RWPE1 (cell line): ENCODE measurements at regions of chr6 and their contacts with region 1.

Region 1: GRCh38 chr6:150813319-150813992 is 52.0 kb upstream of the MTHFD1L start:
- DNase-seq: peak; percentile 62
- H3K27ac ChIP-seq: peak overlapping the region; percentile 31
- CTCF ChIP-seq: no peak

Region 2: DNA sequence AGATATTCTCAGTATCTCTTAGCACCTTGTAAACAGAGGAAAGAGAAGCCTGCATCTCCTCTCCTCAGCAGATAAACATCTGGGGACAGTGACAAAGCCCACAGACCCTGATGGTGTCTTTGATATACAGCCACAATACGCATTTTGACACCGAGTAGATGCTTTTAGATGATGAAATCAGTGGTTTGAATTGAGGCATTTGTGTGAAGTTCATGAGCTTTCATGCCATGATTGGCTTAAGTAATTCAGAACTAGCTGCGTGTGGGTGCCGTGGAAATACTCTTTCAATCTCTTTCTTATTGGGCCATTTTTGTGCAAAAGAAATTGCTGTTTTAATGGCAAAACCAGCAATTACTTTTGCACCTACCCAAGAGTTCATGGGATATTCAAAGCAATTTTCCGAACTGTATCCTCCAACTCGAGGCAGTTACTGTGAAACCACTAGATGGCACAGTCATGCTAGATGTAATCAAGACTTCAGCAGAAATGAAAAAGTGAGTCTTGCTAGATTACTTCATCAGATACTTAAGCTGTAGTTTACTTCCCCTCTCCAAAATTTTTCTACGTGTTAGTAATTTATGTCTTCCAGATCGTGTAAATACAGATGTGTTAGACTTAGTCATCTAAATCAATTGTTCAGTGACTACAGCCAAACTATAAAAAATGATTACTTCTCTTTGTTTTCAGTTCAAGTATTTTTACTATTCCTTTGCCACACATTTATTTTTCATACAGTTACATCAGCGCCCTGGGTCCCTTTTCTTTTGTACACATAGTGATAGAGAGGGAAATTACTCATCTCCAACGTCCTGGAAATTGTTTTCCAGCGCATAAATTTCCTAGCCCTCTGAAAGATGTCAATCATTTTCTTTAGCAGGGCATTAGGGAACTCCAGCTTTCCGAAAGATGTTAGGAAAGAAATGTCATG is 395.3 kb before region 1 on chr6:
- CTCF ChIA-PET with region 1: interaction called, 33 read pairs
- POLR2A ChIA-PET with region 1: no interaction called
- DNase-seq: peak; percentile 83
- H3K27ac ChIP-seq: peak overlapping the region; percentile 72
- CTCF ChIP-seq: peak; percentile 86

Region 3: DNA sequence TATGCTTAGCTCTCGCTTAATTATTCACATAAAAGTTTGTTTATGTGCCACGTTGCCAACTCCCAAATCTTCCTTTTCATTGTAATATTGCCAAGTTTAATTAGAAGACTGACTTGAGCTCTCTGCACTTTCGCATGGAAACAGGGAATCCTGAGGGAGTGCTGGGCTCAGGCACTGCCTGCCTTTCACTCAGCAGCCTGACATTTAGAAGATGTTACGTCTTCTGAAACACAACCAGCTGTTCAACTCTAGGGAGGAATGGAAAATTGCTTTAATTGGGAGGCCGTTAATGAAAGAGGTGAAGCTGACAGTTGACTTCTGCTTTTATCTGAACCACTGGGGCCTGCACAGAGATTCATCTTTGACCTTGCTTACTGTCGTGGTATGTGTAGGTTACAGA is 25.4 kb before region 1 on chr6:
- CTCF ChIA-PET with region 1: no interaction called
- POLR2A ChIA-PET with region 1: no interaction called
- DNase-seq: no peak
- H3K27ac ChIP-seq: no peak overlapping the region
- CTCF ChIP-seq: no peak

Region 4: GRCh38 chr6:150865406-150866146 is 52.1 kb after region 1 on chr6 and contains the start of gene MTHFD1L:
- CTCF ChIA-PET with region 1: interaction called, 14 read pairs
- POLR2A ChIA-PET with region 1: no interaction called
- DNase-seq: peak; percentile 88
- H3K27ac ChIP-seq: peak within 1 kb of the TSS; percentile 89
- CTCF ChIP-seq: peak; percentile 80